Heart right ventricle (tissue), 16 donors: ENCODE measurements at regions of chr18 and their contacts with region 1.

Region 1: GRCh38 chr18:9516437-9517064 is 41.2 kb downstream of the RALBP1 start:
- DNase-seq: no peak
- ATAC-seq: peak in 5 of 8 donors; percentile 19 to 49 (median 42)
- H3K4me3 ChIP-seq: no peak overlapping the region
- H3K27ac ChIP-seq: peak overlapping the region in 1 of 10 donors; percentile 22
- H3K4me1 ChIP-seq: peaks cover 0 to 31% (median 6%) of the 10 kb centered on the region in 9 donors
- H3K27me3 ChIP-seq: no peaks in the 10 kb centered on the region
- CTCF ChIP-seq: peak; percentile 75 to 90 (median 84)

Region 2: DNA sequence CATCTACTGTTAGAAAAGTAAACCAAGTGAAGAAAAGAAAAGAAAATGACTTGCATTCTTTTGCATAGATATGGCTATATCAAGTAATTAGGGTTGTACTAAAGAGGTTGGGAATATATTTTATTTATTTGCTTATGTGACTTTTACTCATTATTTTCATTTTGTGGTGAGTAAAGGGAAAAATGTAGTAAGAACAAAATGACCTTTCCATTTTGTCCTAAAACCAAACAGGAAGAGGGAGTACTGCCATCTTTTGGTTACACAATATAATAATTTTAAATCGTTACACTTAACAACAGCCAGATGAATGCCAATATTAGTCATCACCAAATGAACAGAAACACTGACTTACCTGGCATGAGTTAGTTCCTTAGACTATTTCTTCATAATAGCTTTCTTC is 461.4 kb before region 1 on chr18:
- intact Hi-C with region 1: no loop called
- DNase-seq: no peak
- ATAC-seq: peak in 4 of 8 donors; percentile 23 to 66 (median 48)
- H3K4me3 ChIP-seq: no peak overlapping the region
- H3K27ac ChIP-seq: no peak overlapping the region
- H3K4me1 ChIP-seq: peaks cover 0 to 11% (median 0%) of the 10 kb centered on the region in 9 donors
- H3K27me3 ChIP-seq: no peaks in the 10 kb centered on the region
- CTCF ChIP-seq: peak in 6 of 9 donors; percentile 18 to 56 (median 44)

Region 3: GRCh38 chr18:9066817-9067306 is 449.7 kb before region 1 on chr18:
- intact Hi-C with region 1: loop called in 5 of 10 experiments (anchors 5 to 10 kb)
- DNase-seq: no peak
- ATAC-seq: no peak
- H3K4me3 ChIP-seq: no peak overlapping the region
- H3K27ac ChIP-seq: no peak overlapping the region
- H3K4me1 ChIP-seq: peaks cover 0 to 20% (median 7%) of the 10 kb centered on the region in 9 donors
- H3K27me3 ChIP-seq: no peaks in the 10 kb centered on the region
- CTCF ChIP-seq: no peak

Region 4: GRCh38 chr18:9082711-9083510 is 433.6 kb before region 1 on chr18:
- intact Hi-C with region 1: loop called in 4 of 10 experiments (anchors 5 to 10 kb)
- DNase-seq: no peak
- ATAC-seq: peak in 2 of 8 donors; percentile 56 to 57
- H3K4me3 ChIP-seq: no peak overlapping the region
- H3K27ac ChIP-seq: peak overlapping the region in 1 of 10 donors; percentile 77
- H3K4me1 ChIP-seq: peaks cover 0 to 57% (median 0%) of the 10 kb centered on the region in 9 donors
- H3K27me3 ChIP-seq: no peaks in the 10 kb centered on the region
- CTCF ChIP-seq: no peak

Region 5: GRCh38 chr18:9334329-9334972 is 182.1 kb before region 1 on chr18 and contains the start of gene TWSG1:
- intact Hi-C with region 1: loop called in 1 of 10 experiments (anchors 10 kb)
- DNase-seq: peak; percentile 92 to 95
- ATAC-seq: peak; percentile 95 to 98 (median 96)
- H3K4me3 ChIP-seq: peak within 1 kb of the TSS; percentile 58 to 95 (median 78)
- H3K27ac ChIP-seq: peak within 1 kb of the TSS in 9 of 10 donors; percentile 29 to 88 (median 80)
- H3K4me1 ChIP-seq: peaks cover 0 to 27% (median 16%) of the 10 kb centered on the region in 9 donors
- H3K27me3 ChIP-seq: peaks cover 0 to 4% (median 0%) of the 10 kb centered on the region in 7 donors
- CTCF ChIP-seq: peak in 7 of 9 donors; percentile 33 to 63 (median 51)
- total RNA-seq, gene TWSG1: 7.4 to 15.0 (median 12.0) TPM

Region 6: DNA sequence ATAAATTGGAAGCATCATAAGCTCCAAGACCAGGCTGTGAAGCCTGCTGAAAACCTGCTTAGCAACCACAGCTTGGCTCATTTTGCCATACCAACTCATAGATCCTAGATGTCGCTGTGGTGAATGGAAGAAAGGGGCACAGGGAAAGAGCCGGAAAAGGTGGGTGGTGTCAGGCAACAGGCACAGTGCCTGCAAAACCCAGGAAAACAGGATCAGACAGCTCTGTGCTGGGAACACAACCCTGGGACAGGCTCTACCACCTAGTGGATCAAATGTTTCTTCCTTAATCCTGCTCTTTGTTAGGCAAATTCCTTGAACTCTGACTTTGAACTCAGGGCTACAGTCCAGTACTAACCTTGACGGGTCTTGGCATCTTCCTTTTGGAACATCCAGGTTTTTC is 150.4 kb before region 1 on chr18:
- intact Hi-C with region 1: loop called in 3 of 10 experiments (anchors 10 kb)
- DNase-seq: peak in 1 of 2 donors; percentile 26
- ATAC-seq: peak in 7 of 8 donors; percentile 29 to 61 (median 57)
- H3K4me3 ChIP-seq: no peak overlapping the region
- H3K27ac ChIP-seq: no peak overlapping the region
- H3K4me1 ChIP-seq: peaks cover 0 to 4% (median 0%) of the 10 kb centered on the region in 9 donors
- H3K27me3 ChIP-seq: no peaks in the 10 kb centered on the region
- CTCF ChIP-seq: peak in 6 of 9 donors; percentile 18 to 52 (median 29)

Region 7: GRCh38 chr18:9474983-9475642 is 41.4 kb before region 1 on chr18 and contains the start of gene RALBP1:
- intact Hi-C with region 1: loop called in 1 of 10 experiments (anchors 1 kb)
- DNase-seq: peak; percentile 99 to 100
- ATAC-seq: peak; percentile 97 to 100 (median 99)
- H3K4me3 ChIP-seq: peak within 1 kb of the TSS; percentile 63 to 98 (median 92)
- H3K27ac ChIP-seq: peak within 1 kb of the TSS; percentile 81 to 97 (median 93)
- H3K4me1 ChIP-seq: peaks cover 0 to 29% (median 22%) of the 10 kb centered on the region in 9 donors
- H3K27me3 ChIP-seq: no peaks in the 10 kb centered on the region
- CTCF ChIP-seq: peak in 4 of 9 donors; percentile 26 to 52 (median 50)
- total RNA-seq, gene RALBP1: 39.3 to 53.8 (median 41.8) TPM

Region 8: DNA sequence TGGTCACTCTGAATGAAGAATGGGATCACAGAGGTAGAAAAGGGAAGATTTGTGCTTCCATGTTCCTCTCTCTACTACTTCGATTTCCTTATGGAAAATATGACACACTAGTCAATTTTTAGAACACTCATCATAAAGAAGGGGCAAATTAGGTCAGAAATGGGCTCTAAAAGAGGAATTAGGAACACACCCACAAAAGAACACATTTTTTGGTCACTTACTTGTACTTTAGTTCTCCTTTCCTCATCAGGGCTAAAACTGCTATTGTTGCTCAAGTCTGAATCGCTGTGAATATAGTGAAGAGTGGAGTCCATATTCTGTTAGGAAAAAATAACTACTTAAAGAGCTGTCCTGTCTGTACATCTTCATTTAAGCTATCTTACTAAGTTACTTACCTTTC is 45.2 kb after region 1 on chr18:
- intact Hi-C with region 1: no loop called
- DNase-seq: no peak
- ATAC-seq: peak in 3 of 8 donors; percentile 18 to 38 (median 32)
- H3K4me3 ChIP-seq: no peak overlapping the region
- H3K27ac ChIP-seq: peak overlapping the region in 1 of 10 donors; percentile 57
- H3K4me1 ChIP-seq: peaks cover 0 to 33% (median 13%) of the 10 kb centered on the region in 9 donors
- H3K27me3 ChIP-seq: no peaks in the 10 kb centered on the region
- CTCF ChIP-seq: no peak

Region 9: GRCh38 chr18:9614401-9615279 is 98.1 kb after region 1 on chr18 and contains the start of gene PPP4R1:
- intact Hi-C with region 1: no loop called
- DNase-seq: peak; percentile 75 to 83
- ATAC-seq: peak; percentile 62 to 88 (median 77)
- H3K4me3 ChIP-seq: peak within 1 kb of the TSS; percentile 64 to 91 (median 86)
- H3K27ac ChIP-seq: peak within 1 kb of the TSS; percentile 93 to 99 (median 97)
- H3K4me1 ChIP-seq: peaks cover 3 to 52% (median 31%) of the 10 kb centered on the region in 9 donors
- H3K27me3 ChIP-seq: no peaks in the 10 kb centered on the region
- CTCF ChIP-seq: no peak
- total RNA-seq, gene PPP4R1: 56.8 to 87.4 (median 62.6) TPM